ENCODE measurements at regions of chr12 and their contacts with region 1.

Region 1: GRCh38 chr12:120971299-120972179 is 6.8 kb upstream of the HNF1A start:
- DNase-seq: peak; percentile 9
- H3K4me3 ChIP-seq: no peak overlapping the region
- CTCF ChIP-seq: peak; percentile 61

Region 2: GRCh38 chr12:120580787-120581723 is 390.5 kb before region 1 on chr12 and contains the start of gene POP5:
- CTCF ChIA-PET with region 1: interaction called, 103 read pairs
- POLR2A ChIA-PET with region 1: no interaction called
- DNase-seq: peak; percentile 84
- H3K4me3 ChIP-seq: peak within 1 kb of the TSS; percentile 98
- CTCF ChIP-seq: no peak

Region 3: DNA sequence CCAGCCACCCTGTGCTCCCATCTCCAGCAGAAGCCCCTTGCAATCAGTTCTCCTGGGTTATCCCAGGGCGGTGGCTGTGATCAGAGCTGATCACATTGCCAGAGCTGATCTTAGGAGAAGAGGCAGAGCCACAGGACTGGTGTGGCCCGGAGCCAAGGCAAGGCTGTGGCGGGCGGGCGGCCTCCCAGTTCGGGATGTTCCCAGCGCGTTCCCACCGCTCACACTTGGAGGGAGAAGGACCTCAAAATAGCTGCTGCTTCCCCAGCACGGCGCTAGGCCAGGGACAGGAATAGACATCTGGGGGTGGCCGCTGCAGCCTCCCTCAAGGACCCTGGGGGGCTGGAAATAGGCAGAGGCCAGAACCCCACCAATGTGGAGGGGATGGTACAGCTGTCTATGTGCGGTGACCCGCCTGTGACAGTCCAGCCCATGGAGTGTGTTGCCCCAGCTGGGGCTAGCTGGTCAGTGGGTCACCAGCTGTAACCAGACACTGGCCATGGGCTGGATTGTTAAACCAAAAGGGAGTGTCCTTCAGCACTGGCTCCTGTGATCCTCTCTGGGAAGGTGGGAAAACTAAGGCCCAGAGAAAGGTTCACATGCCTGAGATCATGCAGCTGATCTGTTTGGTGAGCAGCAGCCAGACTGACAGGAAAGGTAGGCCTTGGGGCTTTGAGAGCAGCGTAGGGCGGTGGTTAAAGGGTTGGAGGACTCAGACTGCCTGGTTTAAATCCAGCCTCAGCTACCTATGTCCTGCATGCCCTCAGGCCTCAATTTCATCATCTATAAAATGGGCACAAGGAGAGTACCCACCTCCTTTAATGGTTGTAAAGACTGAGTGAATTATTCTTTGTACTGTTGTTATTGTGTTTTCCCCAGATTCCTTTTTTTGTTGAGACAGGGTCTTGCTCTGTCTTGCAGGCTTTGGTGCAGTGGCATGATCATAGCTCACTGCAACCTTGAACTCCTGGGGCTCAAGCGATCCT is 382.3 kb before region 1 on chr12:
- CTCF ChIA-PET with region 1: interaction called, 103 read pairs
- POLR2A ChIA-PET with region 1: no interaction called
- DNase-seq: no peak
- H3K4me3 ChIP-seq: no peak overlapping the region
- CTCF ChIP-seq: no peak

Region 4: GRCh38 chr12:120710031-120710804 is 261.3 kb before region 1 on chr12 and contains the start of gene UNC119B:
- CTCF ChIA-PET with region 1: interaction called, 15 read pairs
- POLR2A ChIA-PET with region 1: no interaction called
- DNase-seq: no peak
- H3K4me3 ChIP-seq: peak within 1 kb of the TSS; percentile 75
- CTCF ChIP-seq: no peak

Region 5: DNA sequence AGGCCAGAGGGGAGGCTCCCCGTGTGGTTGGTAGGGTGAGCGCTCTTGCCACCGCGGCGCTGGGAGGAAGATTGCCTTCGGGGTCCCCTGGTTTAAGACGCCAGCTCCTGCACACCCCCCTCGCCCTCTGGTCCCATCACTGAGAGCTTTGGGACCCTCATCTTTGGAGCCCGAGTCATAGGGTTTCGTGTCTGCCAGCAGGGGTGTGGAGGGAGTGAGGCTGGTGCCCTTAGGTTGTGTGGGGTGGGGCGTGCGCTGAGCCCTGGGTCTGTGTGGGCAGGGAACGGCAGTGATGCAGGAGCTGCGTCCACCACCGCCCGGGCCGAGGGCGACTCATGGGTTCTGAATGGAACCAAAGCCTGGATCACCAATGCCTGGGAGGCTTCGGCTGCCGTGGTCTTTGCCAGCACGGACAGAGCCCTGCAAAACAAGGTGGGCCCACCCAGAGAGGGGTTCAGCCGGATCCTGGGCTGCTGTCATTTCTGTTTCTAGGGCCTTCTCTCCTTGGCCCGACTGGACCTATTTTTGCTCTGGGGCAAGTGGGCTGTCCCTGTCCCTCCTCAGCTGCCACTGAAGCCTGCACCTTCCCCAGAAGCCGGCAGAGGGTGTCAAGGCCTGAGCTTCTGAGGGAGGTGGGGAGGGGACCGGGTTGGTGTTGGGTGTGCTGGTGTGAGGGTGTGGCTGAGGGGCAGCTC is 233.8 kb before region 1 on chr12:
- CTCF ChIA-PET with region 1: interaction called, 33 read pairs
- POLR2A ChIA-PET with region 1: no interaction called
- DNase-seq: no peak
- H3K4me3 ChIP-seq: no peak overlapping the region
- CTCF ChIP-seq: peak; percentile 59

Region 6: DNA sequence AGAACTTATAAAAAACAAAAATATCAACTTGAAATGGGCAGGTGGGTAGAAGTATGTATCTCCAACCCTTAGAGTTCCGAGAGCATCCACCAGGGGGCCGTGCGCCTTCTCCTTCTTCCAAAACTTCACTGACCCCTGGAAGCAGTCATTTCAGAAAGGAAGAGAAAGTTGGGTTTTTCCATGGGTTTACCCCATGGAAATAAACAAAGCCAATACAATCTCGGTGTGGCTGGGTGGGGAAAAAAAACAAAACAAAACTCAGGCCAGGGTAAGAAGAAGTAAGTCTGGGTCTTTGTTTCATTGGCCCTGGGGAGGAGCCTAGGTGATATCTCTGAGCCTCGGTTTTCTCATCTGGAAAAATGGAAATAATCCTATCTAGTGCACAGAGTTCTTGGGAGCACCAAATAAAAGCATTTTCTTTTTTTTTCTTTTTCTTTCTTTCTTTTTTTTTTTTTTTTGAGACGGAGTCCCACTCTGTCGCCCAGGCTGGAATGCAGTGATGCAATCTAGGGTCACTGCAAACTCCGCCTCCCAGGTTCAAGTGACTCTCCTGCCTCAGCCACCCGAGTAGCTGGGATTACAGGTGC is 26.8 kb before region 1 on chr12:
- CTCF ChIA-PET with region 1: interaction called, 11 read pairs
- POLR2A ChIA-PET with region 1: no interaction called
- DNase-seq: no peak
- H3K4me3 ChIP-seq: no peak overlapping the region
- CTCF ChIP-seq: peak; percentile 71

Region 7: GRCh38 chr12:120993496-120993895 is 22.0 kb after region 1 on chr12:
- CTCF ChIA-PET with region 1: interaction called, 16 read pairs
- POLR2A ChIA-PET with region 1: no interaction called
- DNase-seq: no peak
- H3K4me3 ChIP-seq: no peak overlapping the region
- CTCF ChIP-seq: no peak

Region 8: GRCh38 chr12:122909442-122910288 is 1938.1 kb after region 1 on chr12:
- CTCF ChIA-PET with region 1: no interaction called
- POLR2A ChIA-PET with region 1: no interaction called
- DNase-seq: no peak
- H3K4me3 ChIP-seq: no peak overlapping the region
- CTCF ChIP-seq: no peak